ENCODE measurements at regions of chr15 and their contacts with region 1.

Region 1: GRCh38 chr15:76976572-76977270 is 18.2 kb upstream of the PSTPIP1 start:
- DNase-seq: no peak
- H3K4me3 ChIP-seq: no peak overlapping the region
- H3K27me3 ChIP-seq: peaks cover 5% of the 10 kb centered on the region
- CTCF ChIP-seq: no peak

Region 2: GRCh38 chr15:76994971-76995945 is 18.5 kb after region 1 on chr15 and contains the start of gene PSTPIP1:
- CTCF ChIA-PET with region 1: interaction called, 4 read pairs
- POLR2A ChIA-PET with region 1: interaction called, 12 read pairs
- DNase-seq: no peak
- H3K4me3 ChIP-seq: no peak within 1 kb of the TSS
- H3K27me3 ChIP-seq: peaks cover 7% of the 10 kb centered on the region; the same call in 1 of the 2 replicates
- CTCF ChIP-seq: no peak
- polyA plus RNA-seq, gene PSTPIP1: not detected in 2 replicates

Measured in BJ (cell line).